ENCODE measurements at regions of chr1 and their contacts with region 1.

Region 1: DNA sequence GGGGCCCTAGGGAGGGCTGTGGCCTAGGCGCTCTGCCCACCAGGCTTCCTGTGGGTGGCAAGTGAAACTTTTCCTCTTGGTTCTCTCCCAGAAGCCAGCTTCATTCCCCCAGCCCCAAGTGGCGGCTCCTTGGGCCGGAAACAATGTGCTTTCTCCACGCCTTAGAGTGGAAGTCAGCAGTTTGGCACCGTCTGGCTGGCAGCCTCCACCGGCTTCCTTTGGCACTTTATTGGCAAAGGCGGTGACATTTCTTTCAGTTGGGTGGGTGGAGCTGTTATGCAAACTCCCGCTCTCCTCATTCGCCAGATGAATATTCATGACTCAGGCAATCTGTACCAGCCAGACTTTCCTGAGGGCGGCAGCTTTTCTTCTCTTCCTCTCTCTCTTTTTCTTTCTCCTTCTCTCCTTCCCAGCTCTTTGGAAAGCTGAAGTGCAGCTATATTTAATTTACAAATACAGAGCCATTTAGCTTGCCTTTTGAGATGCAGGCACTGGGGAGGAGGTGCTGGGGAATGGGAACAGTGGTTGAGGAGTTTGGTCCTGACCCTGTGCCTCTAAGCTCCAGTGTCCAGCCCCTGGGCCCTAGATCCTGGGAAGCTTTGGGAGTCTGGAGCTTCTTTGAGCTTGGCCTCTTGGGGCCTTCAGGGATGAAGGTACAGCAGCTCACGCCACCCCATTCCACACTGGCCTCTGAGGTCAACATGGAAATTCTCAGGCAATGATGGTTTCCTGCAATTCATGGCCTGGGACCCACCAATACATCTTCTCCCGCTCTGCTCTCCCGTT is 67.8 kb upstream of the POU3F1 start:
- DNase-seq: no peak
- H3K4me3 ChIP-seq: no peak overlapping the region
- H3K27ac ChIP-seq: no peak overlapping the region
- H3K4me1 ChIP-seq: peaks cover 18% of the 10 kb centered on the region
- H3K27me3 ChIP-seq: no peaks in the 10 kb centered on the region
- CTCF ChIP-seq: no peak

Region 2: GRCh38 chr1:38052750-38053410 is 61.6 kb before region 1 on chr1:
- CTCF ChIA-PET with region 1: no interaction called
- dilution Hi-C with region 1: loop called (anchors 5 kb)
- in situ Hi-C with region 1: no loop called
- intact Hi-C with region 1: no loop called
- DNase-seq: no peak
- H3K4me3 ChIP-seq: no peak overlapping the region
- H3K27ac ChIP-seq: no peak overlapping the region
- H3K4me1 ChIP-seq: peaks cover 10% of the 10 kb centered on the region
- H3K27me3 ChIP-seq: no peaks in the 10 kb centered on the region
- CTCF ChIP-seq: no peak

Region 3: GRCh38 chr1:38138498-38139233 is 24.2 kb after region 1 on chr1:
- CTCF ChIA-PET with region 1: no interaction called
- dilution Hi-C with region 1: no loop called
- in situ Hi-C with region 1: no loop called
- intact Hi-C with region 1: loop called (anchors 2 kb)
- DNase-seq: peak; percentile 90
- H3K4me3 ChIP-seq: no peak overlapping the region
- H3K27ac ChIP-seq: peak overlapping the region; percentile 36
- H3K4me1 ChIP-seq: peaks cover 27% of the 10 kb centered on the region
- H3K27me3 ChIP-seq: peaks cover 2% of the 10 kb centered on the region
- CTCF ChIP-seq: peak; percentile 38 to 48

Measured in mammary epithelial cell (primary cell).